Activated CD4-positive, alpha-beta T cell treated with anti-CD3 and anti-CD28 coated beads for 36 hours (primary cell): ENCODE measurements at regions of chr4 and their contacts with region 1.

Region 1: DNA sequence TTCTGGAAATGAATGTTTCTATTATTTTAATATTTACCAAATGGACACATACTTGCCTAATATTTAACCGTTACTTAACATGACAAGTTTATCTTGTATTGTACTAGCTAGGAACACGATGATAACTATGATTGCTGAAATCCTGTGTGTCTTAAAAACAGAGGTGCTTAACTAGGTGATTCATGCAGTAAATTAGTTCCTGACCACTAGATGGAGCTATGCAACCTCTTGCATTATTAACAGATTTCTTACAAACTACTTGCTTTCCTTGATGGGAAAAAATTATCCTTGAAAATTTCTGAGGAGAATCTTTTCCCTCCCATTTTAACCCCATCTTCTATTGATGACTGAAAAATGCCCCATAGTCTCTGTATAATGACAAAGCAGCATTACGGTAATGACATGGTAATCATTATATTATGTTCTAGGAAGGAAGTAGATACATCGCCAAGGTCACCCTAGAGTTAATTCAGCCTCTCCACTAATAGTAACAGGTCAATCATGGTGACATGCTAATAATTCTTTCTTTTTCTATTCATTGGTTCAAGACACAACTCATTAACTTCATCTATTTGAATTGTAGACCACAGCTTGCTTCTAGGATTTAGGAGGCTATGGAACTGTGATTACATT is 844.2 kb downstream of the RAPGEF2 start:
- DNase-seq: no peak
- ATAC-seq: no peak
- H3K4me3 Mint-ChIP-seq: no peak overlapping the region
- H3K27ac Mint-ChIP-seq: no peak overlapping the region
- H3K4me1 Mint-ChIP-seq: no peaks in the 10 kb centered on the region
- H3K27me3 Mint-ChIP-seq: no peaks in the 10 kb centered on the region

Region 2: GRCh38 chr4:159487284-159487747 is 459.8 kb before region 1 on chr4:
- CTCF ChIA-PET with region 1: interaction called, 3 read pairs
- POLR2A ChIA-PET with region 1: no interaction called
- intact Hi-C with region 1: loop called in 1 of 2 experiments (anchors 10 kb)
- DNase-seq: peak; percentile 57
- ATAC-seq: peak; percentile 88
- H3K4me3 Mint-ChIP-seq: no peak overlapping the region
- H3K27ac Mint-ChIP-seq: no peak overlapping the region
- H3K4me1 Mint-ChIP-seq: no peaks in the 10 kb centered on the region
- H3K27me3 Mint-ChIP-seq: peaks cover 12% of the 10 kb centered on the region

Region 3: GRCh38 chr4:159837071-159837470 is 110.0 kb before region 1 on chr4:
- CTCF ChIA-PET with region 1: no interaction called
- POLR2A ChIA-PET with region 1: no interaction called
- intact Hi-C with region 1: no loop called
- DNase-seq: no peak
- ATAC-seq: no peak
- H3K4me3 Mint-ChIP-seq: no peak overlapping the region
- H3K27ac Mint-ChIP-seq: no peak overlapping the region
- H3K4me1 Mint-ChIP-seq: no peaks in the 10 kb centered on the region
- H3K27me3 Mint-ChIP-seq: no peaks in the 10 kb centered on the region